ENCODE measurements at regions of chr3 and their contacts with region 1.

Region 1: GRCh38 chr3:108208831-108209230 is 13.4 kb downstream of the IFT57 start:
- DNase-seq: no peak
- ATAC-seq: no peak
- H3K4me3 ChIP-seq: no peak overlapping the region
- H3K27ac ChIP-seq: no peak overlapping the region
- H3K4me1 ChIP-seq: no peaks in the 10 kb centered on the region
- H3K27me3 ChIP-seq: no peaks in the 10 kb centered on the region
- CTCF ChIP-seq: no peak

Region 2: DNA sequence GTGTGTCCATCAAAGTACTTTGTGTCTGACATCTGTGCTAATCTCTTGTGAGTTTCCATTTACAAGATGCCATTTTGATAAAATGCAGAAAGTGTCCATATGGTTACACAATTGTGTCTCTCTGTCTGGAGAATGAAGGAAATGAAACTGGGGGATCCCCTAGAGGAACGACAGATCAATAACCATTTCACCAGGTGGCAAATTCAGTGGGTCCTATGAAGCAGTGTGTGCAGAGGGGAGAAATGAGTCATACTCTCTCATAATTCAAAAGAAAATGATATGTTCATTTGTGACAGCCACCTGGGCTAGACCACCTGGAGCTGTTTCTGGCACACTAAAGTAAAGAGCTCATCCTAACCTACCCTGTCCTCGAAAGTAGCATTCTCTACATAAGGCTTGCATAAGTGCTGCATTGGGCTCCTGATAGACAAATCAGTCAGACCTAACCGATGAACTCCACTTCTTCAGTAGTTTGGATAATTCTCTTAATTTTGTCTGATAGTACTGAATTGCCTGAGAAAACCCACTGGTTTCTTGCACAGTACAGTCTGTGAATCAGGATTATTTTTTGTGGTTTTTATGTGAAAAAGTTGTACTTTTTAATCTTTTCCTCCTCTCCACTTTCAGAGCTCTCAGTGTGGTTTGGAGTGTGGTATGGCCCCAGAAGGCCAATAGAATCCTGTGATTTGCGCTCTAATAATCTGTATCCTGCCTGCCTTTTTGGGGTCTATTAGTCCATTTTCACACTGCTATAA is 107.7 kb before region 1 on chr3:
- intact Hi-C with region 1: loop called in 1 of 10 experiments (anchors 5 kb)
- DNase-seq: no peak
- ATAC-seq: no peak
- H3K4me3 ChIP-seq: no peak overlapping the region
- H3K27ac ChIP-seq: no peak overlapping the region
- H3K4me1 ChIP-seq: peaks cover 0 to 36% (median 8%) of the 10 kb centered on the region in 9 donors
- H3K27me3 ChIP-seq: no peaks in the 10 kb centered on the region
- CTCF ChIP-seq: no peak

Region 3: GRCh38 chr3:108150200-108150599 is 58.6 kb before region 1 on chr3:
- intact Hi-C with region 1: no loop called
- DNase-seq: no peak
- ATAC-seq: no peak
- H3K4me3 ChIP-seq: no peak overlapping the region
- H3K27ac ChIP-seq: no peak overlapping the region
- H3K4me1 ChIP-seq: peaks cover 0 to 9% (median 0%) of the 10 kb centered on the region in 9 donors
- H3K27me3 ChIP-seq: no peaks in the 10 kb centered on the region
- CTCF ChIP-seq: no peak

Region 4: GRCh38 chr3:109442531-109442930 is 1233.7 kb after region 1 on chr3:
- intact Hi-C with region 1: no loop called
- DNase-seq: no peak
- ATAC-seq: no peak
- H3K4me3 ChIP-seq: no peak overlapping the region
- H3K27ac ChIP-seq: no peak overlapping the region
- H3K4me1 ChIP-seq: no peaks in the 10 kb centered on the region
- H3K27me3 ChIP-seq: no peaks in the 10 kb centered on the region
- CTCF ChIP-seq: no peak